ENCODE measurements at regions of chr5 and their contacts with region 1.

Region 1: GRCh38 chr5:112160652-112161391 is 258.3 kb downstream of the EPB41L4A start:
- DNase-seq: peak; percentile 95
- H3K4me3 ChIP-seq: peak overlapping the region; percentile 71 to 91 (median 76)
- H3K27ac ChIP-seq: peak overlapping the region; percentile 77 to 86 (median 80)
- H3K4me1 ChIP-seq: peaks cover 0 to 27% (median 16%) of the 10 kb centered on the region in 4 donors
- H3K27me3 ChIP-seq: no peaks in the 10 kb centered on the region
- CTCF ChIP-seq: peak; percentile 93 to 97 (median 96)
- EP300 ChIP-seq: no peak
- POLR2A ChIP-seq: peak; percentile 72

Region 2: GRCh38 chr5:111984044-111984443 is 176.8 kb before region 1 on chr5:
- intact Hi-C with region 1: no loop called
- DNase-seq: no peak
- H3K4me3 ChIP-seq: no peak overlapping the region
- H3K27ac ChIP-seq: no peak overlapping the region
- H3K4me1 ChIP-seq: no peaks in the 10 kb centered on the region
- H3K27me3 ChIP-seq: no peaks in the 10 kb centered on the region
- CTCF ChIP-seq: no peak
- EP300 ChIP-seq: no peak
- POLR2A ChIP-seq: no peak

Region 3: DNA sequence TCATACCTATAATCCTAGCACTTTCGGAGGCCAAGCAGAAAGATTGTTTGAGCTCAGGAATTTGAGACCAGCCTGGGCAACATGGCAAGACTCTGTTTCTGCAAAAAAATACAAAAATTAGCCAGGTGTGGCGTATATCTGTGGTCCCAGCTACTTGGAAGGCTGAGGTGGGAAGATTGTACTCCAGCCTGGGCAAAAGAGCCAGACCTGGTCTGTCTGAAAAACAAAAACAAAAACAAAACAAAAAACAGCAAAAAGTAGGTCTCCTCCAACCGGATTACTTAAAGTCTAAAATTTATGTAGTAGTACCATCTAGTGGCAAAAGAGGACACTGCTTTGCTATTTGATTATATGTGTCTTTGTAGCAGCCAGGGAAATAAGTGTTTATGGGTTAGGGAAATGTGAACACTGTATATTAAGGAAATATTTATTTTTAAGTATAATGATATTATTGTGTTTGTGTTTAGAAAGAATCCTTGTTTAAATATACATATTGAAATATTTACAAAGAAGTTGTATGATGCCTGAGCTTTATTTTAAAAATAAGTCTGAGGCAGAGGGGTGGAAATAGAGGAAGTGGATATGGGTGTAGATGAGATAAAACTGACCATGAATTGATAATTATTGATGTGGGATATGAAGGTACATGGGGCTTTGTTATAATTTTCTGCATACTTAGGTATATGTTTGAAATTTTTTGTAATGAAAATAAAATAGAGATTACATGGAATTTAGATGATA is 596.8 kb after region 1 on chr5:
- intact Hi-C with region 1: loop called (anchors 10 kb)
- DNase-seq: no peak
- H3K4me3 ChIP-seq: peak overlapping the region in 1 of 4 donors; percentile 1
- H3K27ac ChIP-seq: no peak overlapping the region
- H3K4me1 ChIP-seq: peaks cover 0 to 15% (median 10%) of the 10 kb centered on the region in 4 donors
- H3K27me3 ChIP-seq: no peaks in the 10 kb centered on the region
- CTCF ChIP-seq: peak; percentile 69 to 79 (median 74)
- EP300 ChIP-seq: no peak
- POLR2A ChIP-seq: no peak

Measured in sigmoid colon (tissue), 7 donors.